ENCODE measurements at regions of chrX and their contacts with region 1.

Region 1: DNA sequence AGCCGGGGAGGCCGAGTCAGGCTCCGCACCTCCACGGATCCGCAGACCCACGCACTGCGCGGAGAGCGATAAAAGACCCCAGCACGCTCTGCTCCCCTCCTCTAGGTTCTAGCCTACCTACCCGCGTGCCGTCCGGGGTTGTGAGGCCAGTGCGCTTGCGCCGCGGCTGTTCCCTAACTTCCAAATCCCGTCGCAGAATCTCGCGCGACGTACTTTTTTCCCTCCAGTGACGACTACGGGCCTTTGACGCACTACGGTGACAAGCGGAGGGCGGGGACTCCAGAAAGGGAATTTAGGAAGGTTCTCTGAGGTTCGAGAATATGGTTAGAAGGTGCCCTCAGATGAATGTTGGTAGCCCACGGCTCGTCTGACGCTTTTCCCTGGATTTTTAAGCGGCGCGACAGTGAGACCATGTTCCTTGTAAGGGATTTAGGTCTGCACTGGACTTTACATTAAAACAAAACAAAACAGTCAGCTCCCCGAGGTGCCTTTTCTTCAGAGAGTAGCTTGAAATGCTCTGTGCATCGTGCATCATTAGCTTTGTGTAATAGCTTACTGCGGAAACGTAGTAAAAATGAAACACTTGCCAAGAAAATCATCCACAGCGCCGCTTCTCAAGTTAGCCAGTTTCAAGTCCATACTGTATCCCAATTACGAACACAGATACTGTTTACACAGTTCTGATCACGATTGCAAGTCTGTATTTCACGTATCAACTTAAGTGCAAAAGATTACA is at the start of gene NKRF:
- DNase-seq: peak; percentile 79 to 96 (median 88)
- ATAC-seq: peak; percentile 76
- H3K4me3 ChIP-seq: peak within 1 kb of the TSS; percentile 89 to 90
- H3K4me3 Mint-ChIP-seq: peak within 1 kb of the TSS; percentile 87
- H3K27ac ChIP-seq: peak within 1 kb of the TSS; percentile 94 to 96
- H3K27ac Mint-ChIP-seq: peak within 1 kb of the TSS; percentile 97
- H3K4me1 ChIP-seq: peaks cover 7% of the 10 kb centered on the region
- H3K4me1 Mint-ChIP-seq: peaks cover 39% of the 10 kb centered on the region
- H3K27me3 ChIP-seq: no peaks in the 10 kb centered on the region
- H3K27me3 Mint-ChIP-seq: no peaks in the 10 kb centered on the region
- CTCF ChIP-seq: no peak
- total RNA-seq, gene NKRF: 18.3 to 20.5 TPM

Region 2: DNA sequence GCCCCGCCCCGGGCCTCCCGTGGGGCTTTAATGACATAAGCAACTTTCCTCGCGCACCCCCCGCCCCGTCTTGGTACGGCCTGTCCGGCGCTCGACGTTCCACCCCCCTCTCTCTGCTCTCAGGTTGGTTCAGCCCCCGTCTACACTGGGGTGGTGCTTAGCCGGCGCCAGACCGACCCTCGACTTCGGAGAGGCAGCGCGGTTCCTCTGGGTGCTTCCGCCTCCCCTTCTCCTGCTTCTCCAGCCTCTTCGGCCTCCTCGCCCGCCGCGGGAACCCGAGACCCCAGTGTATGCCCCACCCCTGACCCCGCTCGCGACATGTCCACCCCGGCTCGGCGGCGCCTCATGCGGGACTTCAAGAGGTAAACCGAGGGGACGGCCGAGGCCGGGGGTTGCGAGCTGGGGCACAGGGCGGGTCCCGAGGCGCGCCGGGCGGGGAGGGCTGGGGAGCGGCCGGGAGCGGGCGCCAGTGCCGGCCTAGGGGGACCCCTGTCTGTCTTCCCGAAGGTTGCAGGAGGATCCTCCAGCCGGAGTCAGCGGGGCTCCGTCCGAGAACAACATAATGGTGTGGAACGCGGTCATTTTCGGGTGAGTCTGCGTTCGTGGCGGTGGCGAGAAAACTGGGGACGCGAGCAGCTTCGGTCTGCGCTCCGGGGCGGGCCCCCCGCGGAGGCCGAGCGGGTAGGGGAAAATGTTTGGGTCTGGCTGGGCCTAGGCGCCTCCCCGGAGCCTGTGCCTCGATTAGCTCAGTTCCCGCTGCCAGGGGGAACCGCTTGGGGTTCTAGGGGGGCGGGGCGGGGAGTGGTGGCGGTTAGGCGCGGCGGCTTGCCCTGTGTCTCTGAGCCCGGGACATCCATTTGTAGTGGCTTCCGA is 31.8 kb before region 1 on chrX and contains the start of gene UBE2A:
- CTCF ChIA-PET with region 1: interaction called, 3 read pairs
- POLR2A ChIA-PET with region 1: interaction called, 21 read pairs
- intact Hi-C with region 1: loop called (anchors 1 kb)
- DNase-seq: peak; percentile 80 to 95 (median 89)
- ATAC-seq: peak; percentile 95
- H3K4me3 ChIP-seq: peak within 1 kb of the TSS; percentile 70 to 73
- H3K4me3 Mint-ChIP-seq: peak within 1 kb of the TSS; percentile 92
- H3K27ac ChIP-seq: peak within 1 kb of the TSS; percentile 80 to 83
- H3K27ac Mint-ChIP-seq: peak within 1 kb of the TSS; percentile 92
- H3K4me1 ChIP-seq: peaks cover 8% of the 10 kb centered on the region
- H3K4me1 Mint-ChIP-seq: peaks cover 20% of the 10 kb centered on the region
- H3K27me3 ChIP-seq: no peaks in the 10 kb centered on the region
- H3K27me3 Mint-ChIP-seq: no peaks in the 10 kb centered on the region
- CTCF ChIP-seq: no peak
- total RNA-seq, gene UBE2A: 101 to 103 TPM